ENCODE measurements at regions of chrX and their contacts with region 1.

Region 1: GRCh38 chrX:13598877-13599276 is 29.5 kb downstream of the EGFL6 start:
- DNase-seq: no peak
- ATAC-seq: no peak
- H3K4me3 Mint-ChIP-seq: no peak overlapping the region
- H3K27ac Mint-ChIP-seq: no peak overlapping the region
- H3K4me1 Mint-ChIP-seq: no peaks in the 10 kb centered on the region
- H3K27me3 Mint-ChIP-seq: peaks cover 2% of the 10 kb centered on the region

Region 2: GRCh38 chrX:13257223-13258051 is 341.4 kb before region 1 on chrX:
- CTCF ChIA-PET with region 1: no interaction called
- POLR2A ChIA-PET with region 1: no interaction called
- intact Hi-C with region 1: no loop called
- DNase-seq: no peak
- ATAC-seq: peak; percentile 44
- H3K4me3 Mint-ChIP-seq: no peak overlapping the region
- H3K27ac Mint-ChIP-seq: peak overlapping the region; percentile 58
- H3K4me1 Mint-ChIP-seq: peaks cover 35% of the 10 kb centered on the region
- H3K27me3 Mint-ChIP-seq: no peaks in the 10 kb centered on the region

Region 3: GRCh38 chrX:13520936-13521335 is 77.9 kb before region 1 on chrX:
- CTCF ChIA-PET with region 1: no interaction called
- POLR2A ChIA-PET with region 1: no interaction called
- intact Hi-C with region 1: no loop called
- DNase-seq: no peak
- ATAC-seq: no peak
- H3K4me3 Mint-ChIP-seq: no peak overlapping the region
- H3K27ac Mint-ChIP-seq: no peak overlapping the region
- H3K4me1 Mint-ChIP-seq: no peaks in the 10 kb centered on the region
- H3K27me3 Mint-ChIP-seq: no peaks in the 10 kb centered on the region

Region 4: DNA sequence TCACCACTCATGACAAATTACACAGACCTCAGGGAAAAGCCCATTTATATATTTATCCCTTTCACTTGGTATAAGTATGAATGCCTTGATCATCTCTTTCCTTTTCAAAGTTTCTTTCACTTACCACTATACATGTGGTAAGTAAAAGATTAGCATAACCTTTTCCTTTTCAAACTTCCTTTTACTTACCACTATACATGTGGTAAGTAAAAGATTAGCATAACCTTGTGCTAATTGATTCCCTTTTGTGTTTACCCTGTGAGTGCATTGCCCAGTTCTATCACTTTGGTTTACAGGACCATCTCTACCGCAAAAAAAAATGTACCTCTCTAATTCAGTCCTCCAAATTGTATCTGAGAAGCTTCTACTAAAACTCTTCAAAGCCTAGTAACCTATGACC is 21.3 kb after region 1 on chrX:
- CTCF ChIA-PET with region 1: no interaction called
- POLR2A ChIA-PET with region 1: no interaction called
- intact Hi-C with region 1: loop called in 1 of 2 experiments (anchors 1 kb)
- DNase-seq: no peak
- ATAC-seq: no peak
- H3K4me3 Mint-ChIP-seq: no peak overlapping the region
- H3K27ac Mint-ChIP-seq: no peak overlapping the region
- H3K4me1 Mint-ChIP-seq: no peaks in the 10 kb centered on the region
- H3K27me3 Mint-ChIP-seq: no peaks in the 10 kb centered on the region